Naive thymus-derived CD4-positive, alpha-beta T cell (primary cell): ENCODE measurements at regions of chr14 and their contacts with region 1.

Region 1: DNA sequence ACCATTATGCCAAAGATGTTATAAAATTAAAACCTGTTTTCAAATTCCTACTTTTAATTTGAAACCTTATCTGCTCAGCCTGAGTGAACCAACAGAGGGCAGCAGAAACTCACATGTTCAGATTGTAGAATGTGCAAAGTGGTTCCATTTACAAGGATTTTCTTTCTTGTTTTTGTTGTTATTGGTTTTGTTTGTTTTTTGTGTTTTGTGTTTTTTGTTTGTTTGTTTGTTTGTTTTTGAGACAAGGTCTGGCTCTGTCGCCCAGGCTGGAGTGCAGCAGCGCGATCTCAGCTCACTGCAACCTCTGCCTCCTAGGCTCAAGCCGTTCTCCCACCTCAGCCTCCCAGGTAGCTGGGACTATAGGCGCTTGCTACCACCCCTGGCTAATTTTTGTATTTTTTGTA is 22.8 kb upstream of the GARIN2 start:
- DNase-seq: peak in 6 of 9 donors; percentile 26 to 39 (median 38)
- ATAC-seq: no peak
- H3K4me3 ChIP-seq: no peak overlapping the region
- H3K4me3 Mint-ChIP-seq: no peak overlapping the region
- H3K27ac ChIP-seq: no peak overlapping the region
- H3K27ac Mint-ChIP-seq: no peak overlapping the region
- H3K4me1 ChIP-seq: no peaks in the 10 kb centered on the region
- H3K4me1 Mint-ChIP-seq: peaks cover 0 to 8% (median 0%) of the 10 kb centered on the region in 7 donors
- H3K27me3 ChIP-seq: no peaks in the 10 kb centered on the region
- H3K27me3 Mint-ChIP-seq: no peaks in the 10 kb centered on the region

Region 2: GRCh38 chr14:66752109-66752508 is 414.3 kb before region 1 on chr14:
- CTCF ChIA-PET with region 1: no interaction called
- POLR2A ChIA-PET with region 1: no interaction called
- intact Hi-C with region 1: no loop called
- DNase-seq: no peak
- ATAC-seq: no peak
- H3K4me3 ChIP-seq: no peak overlapping the region
- H3K4me3 Mint-ChIP-seq: no peak overlapping the region
- H3K27ac ChIP-seq: no peak overlapping the region
- H3K27ac Mint-ChIP-seq: no peak overlapping the region
- H3K4me1 ChIP-seq: no peaks in the 10 kb centered on the region
- H3K4me1 Mint-ChIP-seq: peaks cover 0 to 5% (median 0%) of the 10 kb centered on the region in 7 donors
- H3K27me3 ChIP-seq: no peaks in the 10 kb centered on the region
- H3K27me3 Mint-ChIP-seq: no peaks in the 10 kb centered on the region

Region 3: GRCh38 chr14:67240978-67241414 is 74.5 kb after region 1 on chr14:
- CTCF ChIA-PET with region 1: no interaction called
- POLR2A ChIA-PET with region 1: no interaction called
- intact Hi-C with region 1: loop called in 1 of 2 experiments (anchors 2 kb)
- DNase-seq: peak; percentile 87 to 93 (median 91)
- ATAC-seq: peak; percentile 97
- H3K4me3 ChIP-seq: peak overlapping the region; percentile 84
- H3K4me3 Mint-ChIP-seq: peak overlapping the region; percentile 81 to 95 (median 91)
- H3K27ac ChIP-seq: peak overlapping the region; percentile 74
- H3K27ac Mint-ChIP-seq: peak overlapping the region; percentile 8 to 92 (median 85)
- H3K4me1 ChIP-seq: peaks cover 6 to 10% of the 10 kb centered on the region in 2 donors
- H3K4me1 Mint-ChIP-seq: peaks cover 16 to 37% (median 28%) of the 10 kb centered on the region in 7 donors
- H3K27me3 ChIP-seq: no peaks in the 10 kb centered on the region
- H3K27me3 Mint-ChIP-seq: peaks cover 0 to 33% (median 0%) of the 10 kb centered on the region in 5 donors

Region 4: GRCh38 chr14:67285876-67286452 is 119.5 kb after region 1 on chr14:
- CTCF ChIA-PET with region 1: interaction called, 18 read pairs
- POLR2A ChIA-PET with region 1: no interaction called
- intact Hi-C with region 1: loop called (anchors 1 kb)
- DNase-seq: peak in 6 of 9 donors; percentile 3 to 37 (median 30)
- ATAC-seq: no peak
- H3K4me3 ChIP-seq: no peak overlapping the region
- H3K4me3 Mint-ChIP-seq: no peak overlapping the region
- H3K27ac ChIP-seq: no peak overlapping the region
- H3K27ac Mint-ChIP-seq: peak overlapping the region in 1 of 9 donors; percentile 83
- H3K4me1 ChIP-seq: no peaks in the 10 kb centered on the region
- H3K4me1 Mint-ChIP-seq: peaks cover 0 to 5% (median 0%) of the 10 kb centered on the region in 7 donors
- H3K27me3 ChIP-seq: no peaks in the 10 kb centered on the region
- H3K27me3 Mint-ChIP-seq: no peaks in the 10 kb centered on the region

Region 5: DNA sequence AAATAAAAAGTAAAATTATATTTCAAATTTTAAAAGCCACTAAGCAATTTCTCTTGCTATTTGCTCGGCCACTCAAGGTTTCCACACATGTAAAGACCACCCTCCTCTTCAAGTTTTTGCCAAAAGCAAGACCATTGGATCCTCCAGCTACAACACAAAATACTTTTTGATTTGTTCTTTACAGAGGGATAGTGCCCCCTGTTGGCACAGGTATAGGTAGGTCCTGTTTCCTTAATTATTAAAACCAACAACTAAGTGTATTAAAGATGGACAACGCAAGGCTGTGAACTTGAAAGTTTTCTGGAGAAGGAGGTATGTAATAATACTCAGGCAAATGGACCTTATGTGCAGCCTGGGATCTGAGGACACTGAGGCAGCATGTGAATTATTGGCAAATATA is 169.3 kb after region 1 on chr14:
- CTCF ChIA-PET with region 1: interaction called, 6 read pairs
- POLR2A ChIA-PET with region 1: no interaction called
- intact Hi-C with region 1: loop called (anchors 2 kb)
- DNase-seq: peak in 5 of 9 donors; percentile 2 to 10 (median 7)
- ATAC-seq: peak; percentile 22
- H3K4me3 ChIP-seq: no peak overlapping the region
- H3K4me3 Mint-ChIP-seq: no peak overlapping the region
- H3K27ac ChIP-seq: no peak overlapping the region
- H3K27ac Mint-ChIP-seq: peak overlapping the region in 1 of 9 donors; percentile 73
- H3K4me1 ChIP-seq: no peaks in the 10 kb centered on the region
- H3K4me1 Mint-ChIP-seq: peaks cover 0 to 1% (median 0%) of the 10 kb centered on the region in 7 donors
- H3K27me3 ChIP-seq: no peaks in the 10 kb centered on the region
- H3K27me3 Mint-ChIP-seq: no peaks in the 10 kb centered on the region

Region 6: DNA sequence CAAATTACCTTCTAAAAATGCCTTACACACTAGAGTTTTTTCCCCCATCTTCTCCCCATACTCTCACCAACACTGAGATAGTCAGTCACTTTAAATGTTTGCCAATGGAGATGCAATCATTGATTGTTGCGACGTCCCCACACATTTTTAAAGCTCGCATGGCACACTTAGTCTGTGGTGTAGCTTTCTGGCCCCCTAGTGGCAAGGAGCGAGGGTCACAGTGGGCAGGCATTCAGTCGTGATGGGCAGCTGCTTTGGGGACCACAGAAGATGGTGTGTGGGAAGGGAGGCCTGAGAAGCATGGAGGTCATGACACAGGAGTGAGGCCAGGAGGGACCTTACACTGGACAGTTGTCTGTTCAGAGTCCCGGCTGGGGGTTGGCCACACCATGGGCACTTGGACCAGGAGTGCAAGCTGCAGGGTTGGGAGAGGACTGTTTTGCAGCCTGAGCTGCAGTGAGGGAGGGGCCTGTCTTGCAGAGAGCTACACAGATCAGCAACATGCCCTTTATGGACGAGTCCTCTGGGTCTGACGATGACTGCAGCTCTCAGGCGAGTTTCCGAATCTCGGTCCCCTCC is 404.9 kb after region 1 on chr14:
- CTCF ChIA-PET with region 1: no interaction called
- POLR2A ChIA-PET with region 1: no interaction called
- intact Hi-C with region 1: loop called in 1 of 2 experiments (anchors 2 kb)
- DNase-seq: peak; percentile 44 to 76 (median 64)
- ATAC-seq: peak; percentile 87
- H3K4me3 ChIP-seq: no peak overlapping the region
- H3K4me3 Mint-ChIP-seq: no peak overlapping the region
- H3K27ac ChIP-seq: no peak overlapping the region
- H3K27ac Mint-ChIP-seq: peak overlapping the region in 1 of 9 donors; percentile 32
- H3K4me1 ChIP-seq: no peaks in the 10 kb centered on the region
- H3K4me1 Mint-ChIP-seq: peaks cover 0 to 18% (median 0%) of the 10 kb centered on the region in 7 donors
- H3K27me3 ChIP-seq: no peaks in the 10 kb centered on the region
- H3K27me3 Mint-ChIP-seq: peaks cover 0 to 13% (median 5%) of the 10 kb centered on the region in 5 donors

Region 7: GRCh38 chr14:68042608-68043210 is 876.3 kb after region 1 on chr14:
- CTCF ChIA-PET with region 1: no interaction called
- POLR2A ChIA-PET with region 1: no interaction called
- intact Hi-C with region 1: no loop called
- DNase-seq: no peak
- ATAC-seq: no peak
- H3K4me3 ChIP-seq: no peak overlapping the region
- H3K4me3 Mint-ChIP-seq: no peak overlapping the region
- H3K27ac ChIP-seq: no peak overlapping the region
- H3K27ac Mint-ChIP-seq: no peak overlapping the region
- H3K4me1 ChIP-seq: no peaks in the 10 kb centered on the region
- H3K4me1 Mint-ChIP-seq: peaks cover 0 to 7% (median 4%) of the 10 kb centered on the region in 7 donors
- H3K27me3 ChIP-seq: no peaks in the 10 kb centered on the region
- H3K27me3 Mint-ChIP-seq: peaks cover 0 to 3% (median 0%) of the 10 kb centered on the region in 5 donors